GM10248 (cell line): ENCODE measurements at regions of chr13 and their contacts with region 1.

Region 1: GRCh38 chr13:59318320-59318930 is 845.3 kb downstream of the DIAPH3 start:
- DNase-seq: peak; percentile 19
- CTCF ChIP-seq: peak; percentile 75

Region 2: DNA sequence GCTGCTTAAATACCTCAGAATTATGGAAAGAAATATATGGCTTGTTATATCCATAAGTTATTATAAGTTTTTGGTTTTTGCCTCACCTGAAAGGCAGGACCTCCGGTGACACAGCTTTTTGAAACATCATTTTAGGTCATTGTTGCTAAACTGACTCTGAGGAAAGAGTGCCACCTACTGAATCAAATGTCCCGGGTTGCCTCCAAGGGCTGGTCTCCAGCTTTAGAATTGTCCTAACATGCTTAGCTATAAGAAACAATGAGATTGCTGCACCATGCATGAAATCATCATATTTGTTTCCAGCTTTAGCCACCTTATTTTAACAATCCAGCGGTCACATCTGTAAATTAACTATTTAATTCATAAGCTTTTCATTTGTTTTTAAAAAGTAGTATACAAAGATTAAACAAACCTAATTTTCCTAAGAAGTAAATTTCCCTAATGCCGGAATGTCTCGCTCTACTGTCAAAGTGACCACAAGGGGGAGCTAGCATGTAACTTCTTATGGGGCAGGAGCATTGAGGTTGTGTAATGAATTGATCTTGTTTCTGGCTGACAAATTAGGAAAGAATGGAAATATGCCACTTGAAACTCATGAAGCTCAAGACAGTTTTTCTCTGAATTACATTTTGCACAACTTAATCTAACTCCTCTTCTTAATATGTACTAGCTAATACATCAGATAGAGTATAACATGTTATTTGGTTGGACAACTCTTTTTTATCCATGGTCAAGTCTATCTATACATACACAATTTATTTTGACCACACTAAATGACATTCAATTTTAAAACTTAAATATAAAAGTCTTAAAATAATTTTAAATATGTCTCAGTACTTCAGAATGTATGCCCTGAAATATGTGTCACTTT is 1693.6 kb before region 1 on chr13:
- CTCF ChIA-PET with region 1: interaction called, 46 read pairs
- POLR2A ChIA-PET with region 1: no interaction called
- DNase-seq: peak; percentile 31
- CTCF ChIP-seq: peak; percentile 80

Region 3: DNA sequence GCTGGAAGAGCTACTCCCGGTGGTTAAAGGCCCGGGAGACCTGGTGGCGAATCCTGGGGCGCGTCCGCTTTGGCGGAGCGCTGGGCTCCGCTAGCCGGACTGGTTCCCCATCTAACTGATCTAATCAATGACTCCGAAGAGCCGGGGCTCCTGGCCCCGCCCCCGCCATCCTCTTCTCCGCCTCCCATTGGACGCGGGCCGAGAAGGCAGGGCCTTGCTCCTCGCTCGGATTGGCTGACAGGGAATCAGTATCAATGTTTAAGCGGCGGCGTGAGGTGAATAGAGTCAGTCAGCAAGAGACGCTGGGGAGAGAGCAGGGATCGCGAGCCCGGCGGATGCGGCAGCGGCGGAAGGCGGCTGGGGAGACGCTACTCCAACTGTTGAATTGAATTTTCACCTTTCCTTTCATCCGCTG is 1688.6 kb before region 1 on chr13:
- CTCF ChIA-PET with region 1: interaction called, 46 read pairs
- POLR2A ChIA-PET with region 1: no interaction called
- DNase-seq: peak; percentile 20
- CTCF ChIP-seq: no peak

Region 4: DNA sequence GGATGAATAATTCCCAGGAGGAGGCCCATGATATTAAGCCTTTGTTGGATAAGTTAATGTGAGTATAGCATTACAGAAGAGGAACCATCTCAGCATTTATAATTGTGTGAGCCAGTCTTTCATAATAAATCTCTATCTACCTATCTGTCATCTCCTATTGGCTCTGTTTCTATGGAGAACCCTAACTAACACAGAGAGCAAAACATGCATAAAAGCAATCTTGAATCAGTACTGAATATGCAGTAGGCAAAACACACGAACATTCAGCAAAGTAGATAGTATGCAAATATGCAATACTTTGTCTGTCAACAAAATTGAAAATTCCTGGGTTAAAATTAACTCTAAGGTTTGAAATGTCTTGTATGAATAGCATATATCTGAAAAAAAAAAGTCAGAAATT is 121.0 kb before region 1 on chr13:
- CTCF ChIA-PET with region 1: no interaction called
- POLR2A ChIA-PET with region 1: no interaction called
- DNase-seq: no peak
- CTCF ChIP-seq: no peak

Region 5: GRCh38 chr13:59330764-59331163 is 12.3 kb after region 1 on chr13:
- CTCF ChIA-PET with region 1: interaction called, 24 read pairs
- POLR2A ChIA-PET with region 1: no interaction called
- DNase-seq: no peak
- CTCF ChIP-seq: no peak

Region 6: GRCh38 chr13:59345316-59345715 is 26.9 kb after region 1 on chr13:
- CTCF ChIA-PET with region 1: interaction called, 10 read pairs
- POLR2A ChIA-PET with region 1: no interaction called
- DNase-seq: no peak
- CTCF ChIP-seq: no peak